ENCODE measurements at regions of chr1 and their contacts with region 1.

Region 1: DNA sequence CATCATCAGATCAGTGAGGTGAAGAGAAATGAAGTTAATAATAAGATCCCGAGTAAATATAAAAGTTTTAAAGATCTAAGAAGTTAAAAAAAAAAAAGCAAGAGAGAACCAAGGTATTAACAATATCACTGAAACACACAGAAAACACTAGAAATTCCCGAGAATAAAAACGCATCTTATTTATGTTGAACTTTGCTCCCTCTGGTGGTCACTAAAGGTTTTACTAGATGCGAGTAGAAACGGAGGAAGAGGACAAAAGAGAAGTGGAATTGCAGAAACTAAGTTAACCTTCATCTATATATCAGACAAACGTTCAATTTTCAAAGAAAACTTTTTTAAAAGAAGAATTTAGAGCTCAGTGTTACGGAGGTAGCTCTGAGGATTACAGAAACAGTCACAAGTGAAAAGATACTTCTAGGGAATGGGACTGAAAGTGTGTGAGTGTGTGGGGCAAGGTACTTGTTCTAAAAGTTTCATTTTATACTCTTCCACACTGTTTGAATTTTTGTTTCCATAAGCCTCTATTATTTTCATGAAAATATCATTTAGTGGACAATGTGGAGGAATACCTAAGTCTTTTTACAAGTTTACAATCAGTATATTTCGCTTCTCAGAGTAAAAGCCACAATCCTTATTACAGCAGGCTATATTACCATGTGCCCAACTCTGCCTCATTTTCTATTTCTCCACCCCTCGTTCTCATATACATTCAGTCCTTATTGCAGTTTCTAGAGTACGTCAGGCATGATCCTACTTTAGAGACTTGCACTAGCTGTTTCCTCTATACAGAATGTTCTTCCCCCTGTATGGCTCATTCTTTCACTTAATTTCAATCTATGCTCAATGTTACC is 19.7 kb downstream of the ACBD6 start:
- DNase-seq: no peak
- H3K4me3 Mint-ChIP-seq: no peak overlapping the region
- H3K27ac Mint-ChIP-seq: no peak overlapping the region
- H3K4me1 Mint-ChIP-seq: peaks cover 18% of the 10 kb centered on the region
- H3K27me3 Mint-ChIP-seq: no peaks in the 10 kb centered on the region

Region 2: GRCh38 chr1:179706339-179706941 is 776.2 kb before region 1 on chr1:
- intact Hi-C with region 1: loop called (anchors 5 kb)
- DNase-seq: peak; percentile 47
- H3K4me3 Mint-ChIP-seq: no peak overlapping the region
- H3K27ac Mint-ChIP-seq: no peak overlapping the region
- H3K4me1 Mint-ChIP-seq: peaks cover 25% of the 10 kb centered on the region
- H3K27me3 Mint-ChIP-seq: peaks cover 3% of the 10 kb centered on the region

Region 3: DNA sequence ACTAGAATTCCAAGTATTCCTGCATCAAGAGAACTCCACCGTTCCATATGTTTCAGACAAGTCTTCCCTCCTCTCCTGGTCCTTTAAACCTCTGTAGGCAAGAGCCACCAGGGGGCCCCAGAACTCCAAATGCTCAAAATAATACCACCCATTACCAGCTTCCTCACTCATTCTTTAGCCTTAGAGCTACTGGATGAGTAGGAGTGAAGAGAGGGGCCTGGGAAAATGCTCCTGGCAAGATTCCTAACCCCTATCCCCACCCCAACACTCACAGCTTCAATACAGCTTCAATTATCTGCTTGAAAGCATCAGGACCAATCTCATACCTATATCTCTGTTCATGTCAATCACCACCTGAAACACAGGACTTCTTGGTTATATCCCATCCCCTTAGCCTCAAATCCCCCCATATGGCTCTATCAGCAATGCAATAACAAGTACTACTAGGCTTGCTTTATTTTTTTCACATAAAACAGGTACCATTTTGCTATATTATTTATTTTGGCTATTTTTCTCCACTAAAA is 614.8 kb before region 1 on chr1:
- intact Hi-C with region 1: loop called (anchors 5 kb)
- DNase-seq: peak; percentile 14
- H3K4me3 Mint-ChIP-seq: no peak overlapping the region
- H3K27ac Mint-ChIP-seq: no peak overlapping the region
- H3K4me1 Mint-ChIP-seq: peaks cover 9% of the 10 kb centered on the region
- H3K27me3 Mint-ChIP-seq: no peaks in the 10 kb centered on the region

Region 4: GRCh38 chr1:180252638-180253536 is 229.8 kb before region 1 on chr1:
- intact Hi-C with region 1: loop called (anchors 1 kb)
- DNase-seq: peak; percentile 48
- H3K4me3 Mint-ChIP-seq: no peak overlapping the region
- H3K27ac Mint-ChIP-seq: no peak overlapping the region
- H3K4me1 Mint-ChIP-seq: peaks cover 11% of the 10 kb centered on the region
- H3K27me3 Mint-ChIP-seq: peaks cover 7% of the 10 kb centered on the region

Region 5: DNA sequence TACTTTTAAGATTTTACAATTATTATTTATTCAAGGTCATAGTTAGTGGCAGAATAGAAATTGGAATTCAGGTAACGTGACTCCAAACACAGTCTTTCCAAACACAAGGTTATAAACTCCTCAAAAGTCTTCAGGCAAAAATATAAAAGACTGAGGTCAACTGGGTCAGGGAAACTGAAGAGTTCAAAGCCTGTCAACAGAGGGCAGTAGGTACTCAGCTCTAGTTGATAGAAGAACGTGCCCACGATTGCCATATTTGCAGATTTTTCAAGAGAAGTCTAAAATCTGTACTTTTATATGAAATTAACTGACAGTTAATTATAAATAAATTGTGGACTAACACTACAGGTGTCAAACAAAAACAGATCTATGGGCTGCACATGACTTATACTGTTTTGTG is 117.6 kb before region 1 on chr1:
- intact Hi-C with region 1: loop called (anchors 1 kb)
- DNase-seq: no peak
- H3K4me3 Mint-ChIP-seq: no peak overlapping the region
- H3K27ac Mint-ChIP-seq: no peak overlapping the region
- H3K4me1 Mint-ChIP-seq: no peaks in the 10 kb centered on the region
- H3K27me3 Mint-ChIP-seq: no peaks in the 10 kb centered on the region

Region 6: DNA sequence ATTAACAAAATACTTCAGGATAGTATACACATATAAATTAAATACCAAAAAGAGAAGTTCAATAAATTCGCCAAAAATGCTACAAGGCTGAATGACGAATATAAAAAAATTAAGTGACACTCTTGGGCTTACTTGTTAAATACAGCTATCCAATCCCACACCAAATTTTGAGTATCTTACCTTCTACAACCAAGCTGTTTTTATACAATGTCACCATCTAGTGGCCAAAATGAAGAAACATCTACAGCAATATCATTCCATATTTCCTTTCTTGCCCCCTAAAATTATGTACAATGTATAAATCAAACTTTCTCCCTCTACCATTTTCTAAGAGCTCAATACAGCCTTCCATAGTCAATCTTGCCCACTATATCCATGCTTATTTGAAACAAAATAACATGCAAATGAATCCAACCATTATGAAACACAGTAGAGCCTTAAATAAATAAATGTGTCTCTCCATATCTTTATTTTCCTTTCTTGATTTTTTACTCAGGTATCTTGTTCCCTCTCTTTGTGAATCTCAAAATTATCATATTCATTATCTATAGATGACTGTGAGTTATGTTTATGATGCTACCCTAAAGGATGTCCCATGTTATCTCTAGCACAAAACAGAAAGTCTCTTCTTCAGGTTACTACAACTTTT is 66.5 kb before region 1 on chr1:
- intact Hi-C with region 1: loop called (anchors 5 kb)
- DNase-seq: no peak
- H3K4me3 Mint-ChIP-seq: no peak overlapping the region
- H3K27ac Mint-ChIP-seq: no peak overlapping the region
- H3K4me1 Mint-ChIP-seq: no peaks in the 10 kb centered on the region
- H3K27me3 Mint-ChIP-seq: no peaks in the 10 kb centered on the region

Measured in activated T-helper 1 cell treated with anti-CD3 and anti-CD28 coated beads, Interleukin-12 subunit alpha, Interleukin-12 subunit beta, Interleukin-2, Interleukin-4 antibody, amounts not matched to agents 30 ng/mL and 10 ng/mL and 1 ng/mL, durations not matched to agents 14 hours and 24 hours and 36 hours (primary cell).